Caco-2 (cell line): ENCODE measurements at regions of chrX and their contacts with region 1.

Region 1: GRCh38 chrX:39755143-39756032 is 342.4 kb downstream of the BCOR start:
- DNase-seq: peak; percentile 58 to 82
- H3K4me3 ChIP-seq: no peak overlapping the region
- H3K4me3 Mint-ChIP-seq: no peak overlapping the region
- H3K27ac Mint-ChIP-seq: peak overlapping the region; percentile 61
- H3K4me1 ChIP-seq: peaks cover 39% of the 10 kb centered on the region
- H3K4me1 Mint-ChIP-seq: peaks cover 17% of the 10 kb centered on the region
- H3K27me3 ChIP-seq: no peaks in the 10 kb centered on the region
- H3K27me3 Mint-ChIP-seq: no peaks in the 10 kb centered on the region
- CTCF ChIP-seq: no peak

Region 2: DNA sequence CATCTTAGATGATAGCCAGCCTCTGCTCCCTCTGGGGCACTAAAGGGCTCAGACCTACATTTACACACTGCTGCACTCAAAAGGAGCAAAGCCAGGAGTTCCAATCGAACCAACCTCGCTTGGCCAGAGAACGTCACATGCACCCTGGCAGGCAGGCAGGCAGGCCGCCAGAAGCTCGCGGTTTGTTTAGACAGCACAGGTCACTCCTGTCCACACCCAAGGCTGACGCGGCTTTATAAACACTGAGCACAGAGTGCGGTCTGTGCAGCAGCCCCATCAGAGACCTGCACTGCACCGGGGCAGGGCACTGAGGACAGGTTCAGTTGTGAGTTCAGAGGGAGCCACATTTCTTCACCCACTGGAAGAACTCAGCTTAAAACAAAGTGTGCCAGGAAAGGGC is 198.5 kb after region 1 on chrX:
- CTCF ChIA-PET with region 1: no interaction called
- POLR2A ChIA-PET with region 1: no interaction called
- intact Hi-C with region 1: loop called (anchors 10 kb)
- DNase-seq: peak; percentile 49 to 70
- H3K4me3 ChIP-seq: no peak overlapping the region
- H3K4me3 Mint-ChIP-seq: peak overlapping the region; percentile 38
- H3K27ac Mint-ChIP-seq: peak overlapping the region; percentile 73
- H3K4me1 ChIP-seq: peaks cover 10% of the 10 kb centered on the region; the same call in 1 of the 2 replicates
- H3K4me1 Mint-ChIP-seq: peaks cover 29% of the 10 kb centered on the region
- H3K27me3 ChIP-seq: no peaks in the 10 kb centered on the region
- H3K27me3 Mint-ChIP-seq: no peaks in the 10 kb centered on the region
- CTCF ChIP-seq: no peak